Mammary epithelial cell (primary cell): ENCODE measurements at regions of chr12 and their contacts with region 1.

Region 1: DNA sequence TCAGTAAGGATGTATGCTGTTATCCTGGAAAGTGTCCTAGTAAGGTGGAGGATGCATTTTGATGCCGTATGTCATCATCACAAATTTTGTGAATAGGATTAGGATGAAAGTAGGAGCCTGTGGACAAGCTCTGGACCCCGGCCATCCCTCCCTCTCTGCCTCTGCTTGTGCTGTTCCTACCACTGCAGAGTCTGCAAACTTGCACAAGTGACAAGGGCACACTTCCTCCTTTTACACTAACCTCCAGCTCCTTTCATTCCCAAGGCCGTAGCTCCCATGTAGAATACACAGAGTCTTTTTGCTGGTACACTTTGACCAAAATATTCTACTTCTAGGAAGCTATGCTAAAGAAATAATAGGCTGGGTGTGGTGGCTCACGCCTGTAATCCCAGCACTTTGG is 13.3 kb upstream of the TMCC3 start:
- DNase-seq: no peak
- H3K4me3 ChIP-seq: no peak overlapping the region
- H3K27ac ChIP-seq: no peak overlapping the region
- H3K4me1 ChIP-seq: peaks cover 7% of the 10 kb centered on the region
- H3K27me3 ChIP-seq: no peaks in the 10 kb centered on the region
- CTCF ChIP-seq: no peak

Region 2: GRCh38 chr12:94740601-94741362 is 77.1 kb after region 1 on chr12:
- CTCF ChIA-PET with region 1: no interaction called
- dilution Hi-C with region 1: no loop called
- in situ Hi-C with region 1: no loop called
- intact Hi-C with region 1: loop called (anchors 5 kb)
- DNase-seq: no peak
- H3K4me3 ChIP-seq: no peak overlapping the region
- H3K27ac ChIP-seq: no peak overlapping the region
- H3K4me1 ChIP-seq: peaks cover 7% of the 10 kb centered on the region
- H3K27me3 ChIP-seq: no peaks in the 10 kb centered on the region
- CTCF ChIP-seq: no peak

Region 3: DNA sequence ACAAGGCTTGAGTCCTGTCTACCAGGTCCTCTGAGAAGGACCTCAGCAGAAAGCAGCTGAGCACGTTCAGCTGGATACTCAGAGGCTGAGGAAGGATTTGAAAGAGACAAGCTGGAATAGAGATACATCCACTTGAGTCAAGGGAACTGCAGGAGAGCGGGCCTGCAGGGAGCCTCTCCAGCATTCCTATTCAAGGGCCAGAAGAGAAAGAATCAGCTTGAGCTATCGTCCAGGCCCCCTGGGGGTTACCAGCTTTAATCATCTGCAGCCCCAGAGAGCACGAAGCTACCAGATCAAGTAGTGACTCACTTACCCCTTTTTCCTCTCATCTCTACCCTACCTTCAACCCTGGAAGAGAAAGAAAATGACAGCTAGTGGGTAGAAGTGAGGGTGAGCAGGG is 258.9 kb after region 1 on chr12:
- CTCF ChIA-PET with region 1: no interaction called
- dilution Hi-C with region 1: no loop called
- in situ Hi-C with region 1: no loop called
- intact Hi-C with region 1: no loop called
- DNase-seq: no peak
- H3K4me3 ChIP-seq: no peak overlapping the region
- H3K27ac ChIP-seq: no peak overlapping the region
- H3K4me1 ChIP-seq: no peaks in the 10 kb centered on the region
- H3K27me3 ChIP-seq: no peaks in the 10 kb centered on the region
- CTCF ChIP-seq: no peak